Astrocyte of the cerebellum (primary cell): ENCODE measurements at regions of chr1 and their contacts with region 1.

Region 1: GRCh38 chr1:183244466-183244865 is 58.4 kb downstream of the LAMC2 start:
- DNase-seq: no peak
- H3K4me3 ChIP-seq: no peak overlapping the region
- CTCF ChIP-seq: no peak

Region 2: DNA sequence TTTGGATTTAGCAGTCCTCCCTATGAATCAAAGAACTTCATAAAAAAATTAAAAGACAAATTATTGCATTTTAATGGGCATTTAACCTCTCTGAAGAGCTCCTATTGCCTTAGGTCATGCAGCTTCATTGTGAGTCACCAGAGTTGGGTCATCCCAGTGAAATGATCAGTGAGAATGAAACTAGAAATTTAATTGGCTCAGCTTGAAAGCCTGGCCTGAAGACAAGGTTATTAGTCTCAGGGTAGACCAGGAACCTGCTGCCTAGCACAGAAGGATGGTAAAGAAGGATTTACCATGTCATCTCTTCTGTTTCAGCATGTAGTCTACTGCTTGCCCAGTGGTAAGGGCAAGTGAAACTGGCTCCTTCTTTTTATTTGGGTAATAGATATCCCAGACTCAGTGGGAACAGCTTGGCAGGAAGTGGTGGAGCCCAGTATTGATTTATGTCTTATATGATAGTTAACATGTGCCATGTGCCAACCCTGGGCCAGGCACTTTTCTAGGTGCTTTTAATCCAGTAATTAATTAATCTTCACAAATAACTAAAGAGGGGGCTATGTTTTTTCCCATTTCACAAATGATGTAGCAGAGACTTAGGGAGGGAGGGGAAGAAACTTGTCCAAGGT is 34.8 kb before region 1 on chr1:
- in situ Hi-C with region 1: no loop called
- DNase-seq: peak; percentile 27
- H3K4me3 ChIP-seq: no peak overlapping the region
- CTCF ChIP-seq: no peak

Region 3: GRCh38 chr1:183327434-183328290 is 83.2 kb after region 1 on chr1:
- in situ Hi-C with region 1: loop called (anchors 5 kb)
- DNase-seq: no peak
- H3K4me3 ChIP-seq: no peak overlapping the region
- CTCF ChIP-seq: no peak